H1 (cell line): ENCODE measurements at regions of chr3 and their contacts with region 1.

Region 1: DNA sequence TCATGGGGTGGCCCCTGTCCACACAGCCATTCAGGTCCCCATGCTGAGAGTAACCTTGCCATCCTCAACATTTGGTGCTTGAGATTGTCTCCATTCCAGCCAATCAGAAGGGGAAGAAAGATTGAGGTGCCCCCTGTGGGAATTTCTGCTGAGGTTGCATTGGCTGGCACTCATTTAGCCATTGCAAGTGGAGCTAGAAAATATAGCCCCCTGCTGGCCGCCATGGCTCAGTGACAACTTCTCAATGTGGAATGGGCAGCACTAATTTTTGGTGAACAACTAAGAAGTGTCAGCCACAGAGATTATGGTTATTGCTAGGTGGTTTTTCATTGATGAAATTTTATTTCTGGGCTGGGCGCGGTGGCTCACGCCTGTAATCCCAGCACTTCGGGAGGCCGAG is 22.0 kb downstream of the COL6A6 start:
- DNase-seq: peak; percentile 25 to 70
- H3K4me3 ChIP-seq: no peak overlapping the region
- H3K27ac ChIP-seq: no peak overlapping the region
- H3K4me1 ChIP-seq: no peaks in the 10 kb centered on the region
- H3K27me3 ChIP-seq: no peaks in the 10 kb centered on the region
- CTCF ChIP-seq: peak; percentile 53 to 81 (median 79)
- EP300 ChIP-seq: no peak
- POLR2A ChIP-seq: no peak
- RAD21 ChIP-seq: peak; percentile 62 to 75

Region 2: GRCh38 chr3:130480736-130481135 is 58.3 kb before region 1 on chr3:
- CTCF ChIA-PET with region 1: interaction called, 12 read pairs
- POLR2A ChIA-PET with region 1: no interaction called
- DNase-seq: peak in 1 of 2 experiments; percentile 33
- H3K4me3 ChIP-seq: no peak overlapping the region
- H3K27ac ChIP-seq: no peak overlapping the region
- H3K4me1 ChIP-seq: no peaks in the 10 kb centered on the region
- H3K27me3 ChIP-seq: no peaks in the 10 kb centered on the region
- CTCF ChIP-seq: peak; percentile 51 to 80 (median 65)
- EP300 ChIP-seq: no peak
- POLR2A ChIP-seq: no peak
- RAD21 ChIP-seq: peak; percentile 80 to 81